ENCODE measurements at regions of chr1 and their contacts with region 1.

Region 1: DNA sequence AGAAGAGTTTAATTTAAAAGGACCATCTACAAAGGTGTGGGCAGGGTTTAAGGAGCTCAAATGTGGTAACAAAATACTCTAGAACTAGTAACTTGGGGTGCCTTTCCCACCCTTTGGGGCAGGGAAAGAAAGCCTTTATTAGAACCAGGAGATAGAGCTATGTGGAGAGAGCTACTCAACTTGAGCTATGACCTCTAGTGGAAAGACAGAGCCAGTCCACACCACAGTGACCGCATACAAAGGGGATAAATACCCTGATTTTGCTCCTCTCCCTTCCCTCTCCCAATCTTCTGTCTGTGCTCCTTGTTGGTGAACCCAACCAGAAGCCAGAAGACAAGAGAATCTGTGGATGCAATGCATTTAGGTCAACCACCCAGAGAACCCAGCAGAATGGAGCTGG is 54.4 kb upstream of the JAK1 start:
- DNase-seq: no peak
- ATAC-seq: peak; percentile 98
- H3K4me3 Mint-ChIP-seq: no peak overlapping the region
- H3K27ac Mint-ChIP-seq: no peak overlapping the region
- H3K4me1 Mint-ChIP-seq: peaks cover 29% of the 10 kb centered on the region
- H3K27me3 Mint-ChIP-seq: no peaks in the 10 kb centered on the region
- CTCF ChIP-seq: no peak

Region 2: GRCh38 chr1:65036545-65037180 is 15.9 kb after region 1 on chr1:
- CTCF ChIA-PET with region 1: interaction called, 11 read pairs
- POLR2A ChIA-PET with region 1: no interaction called
- DNase-seq: no peak
- ATAC-seq: no peak
- H3K4me3 Mint-ChIP-seq: no peak overlapping the region
- H3K27ac Mint-ChIP-seq: no peak overlapping the region
- H3K4me1 Mint-ChIP-seq: no peaks in the 10 kb centered on the region
- H3K27me3 Mint-ChIP-seq: no peaks in the 10 kb centered on the region
- CTCF ChIP-seq: no peak

Region 3: DNA sequence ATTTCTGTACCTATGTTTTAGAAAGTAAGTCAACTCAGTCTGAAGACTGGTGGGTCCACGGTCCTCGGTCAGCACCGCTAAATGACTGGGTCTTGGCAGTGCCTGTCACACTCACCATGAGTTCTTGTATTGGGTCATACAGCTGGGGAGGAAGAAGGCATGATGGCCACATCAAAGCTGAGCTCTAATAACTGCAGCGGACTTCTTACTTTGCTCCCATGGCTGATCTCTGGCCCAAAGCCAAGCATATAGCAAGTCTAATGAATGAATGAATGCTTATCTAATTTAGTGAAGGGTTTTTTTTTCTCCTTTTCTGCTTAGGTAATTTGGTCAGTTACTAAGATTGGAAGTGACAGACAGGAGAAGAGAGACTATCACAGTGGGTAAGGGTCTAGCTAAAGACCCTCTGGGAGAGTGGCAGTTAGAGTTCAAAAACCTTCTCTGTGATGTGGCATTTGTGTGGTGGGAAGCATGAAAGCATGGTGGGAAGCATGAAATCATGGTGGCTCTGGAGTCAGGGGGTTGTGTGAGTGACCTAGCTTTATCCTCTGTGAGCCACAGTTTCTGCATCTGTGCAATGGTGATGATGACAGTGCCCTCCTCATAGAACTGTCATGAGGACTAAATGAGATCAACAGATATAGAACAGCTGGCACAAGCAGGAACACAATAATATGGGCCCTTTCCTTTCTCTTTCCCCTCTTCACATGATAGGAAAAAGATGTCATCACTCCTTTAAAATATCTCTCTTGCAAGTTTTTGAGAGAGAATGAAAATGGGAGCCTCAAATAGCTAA is 24.4 kb after region 1 on chr1:
- CTCF ChIA-PET with region 1: interaction called, 10 read pairs
- POLR2A ChIA-PET with region 1: no interaction called
- DNase-seq: no peak
- ATAC-seq: no peak
- H3K4me3 Mint-ChIP-seq: no peak overlapping the region
- H3K27ac Mint-ChIP-seq: no peak overlapping the region
- H3K4me1 Mint-ChIP-seq: no peaks in the 10 kb centered on the region
- H3K27me3 Mint-ChIP-seq: peaks cover 4% of the 10 kb centered on the region; the same call in 1 of the 2 replicates
- CTCF ChIP-seq: no peak

Region 4: GRCh38 chr1:65235867-65236805 is 215.4 kb after region 1 on chr1:
- CTCF ChIA-PET with region 1: no interaction called
- POLR2A ChIA-PET with region 1: no interaction called
- DNase-seq: no peak
- ATAC-seq: peak; percentile 55
- H3K4me3 Mint-ChIP-seq: no peak overlapping the region
- H3K27ac Mint-ChIP-seq: no peak overlapping the region
- H3K4me1 Mint-ChIP-seq: peaks cover 8% of the 10 kb centered on the region; the same call in 1 of the 2 replicates
- H3K27me3 Mint-ChIP-seq: no peaks in the 10 kb centered on the region
- CTCF ChIP-seq: peak; percentile 49; the same call in 1 of the 2 replicates